ENCODE measurements at regions of chr4 and their contacts with region 1.

Region 1: DNA sequence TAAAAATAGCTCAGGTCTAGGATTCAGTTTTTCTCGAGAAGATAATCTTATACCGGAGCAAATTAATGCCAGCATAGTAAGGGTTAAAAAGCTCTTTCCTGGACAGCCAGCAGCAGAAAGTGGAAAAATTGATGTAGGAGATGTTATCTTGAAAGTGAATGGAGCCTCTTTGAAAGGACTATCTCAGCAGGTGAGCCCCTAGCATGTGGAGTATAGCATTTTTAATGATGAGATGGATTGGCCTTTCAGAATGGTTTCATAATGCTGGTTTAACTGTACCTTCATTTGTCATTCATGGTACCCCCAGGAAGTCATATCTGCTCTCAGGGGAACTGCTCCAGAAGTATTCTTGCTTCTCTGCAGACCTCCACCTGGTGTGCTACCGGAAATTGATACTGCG is 79.4 kb downstream of the SLC10A6 start:
- DNase-seq: no peak
- ATAC-seq: no peak
- H3K4me3 Mint-ChIP-seq: no peak overlapping the region
- H3K27ac Mint-ChIP-seq: no peak overlapping the region
- H3K4me1 Mint-ChIP-seq: no peaks in the 10 kb centered on the region
- H3K27me3 Mint-ChIP-seq: no peaks in the 10 kb centered on the region

Region 2: DNA sequence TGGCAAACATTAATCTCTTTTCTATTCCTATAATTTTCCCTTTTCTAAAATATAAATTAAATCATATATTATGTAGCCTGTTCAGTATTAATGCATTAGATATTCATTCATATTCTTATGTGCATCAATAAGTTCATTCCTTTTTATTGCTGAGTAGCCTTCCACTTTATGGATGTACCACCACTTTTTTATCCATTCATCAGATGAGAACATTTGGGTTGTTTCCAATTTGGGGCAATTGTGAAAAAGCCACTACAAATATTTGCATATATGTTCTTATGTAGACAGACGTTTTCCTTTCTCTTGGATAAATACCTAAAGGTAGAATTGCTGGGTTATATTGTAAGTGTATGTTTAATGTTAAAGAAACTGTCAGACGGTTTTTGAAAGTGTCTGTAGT is 330.5 kb before region 1 on chr4:
- CTCF ChIA-PET with region 1: no interaction called
- POLR2A ChIA-PET with region 1: no interaction called
- intact Hi-C with region 1: loop called in 1 of 2 experiments (anchors 5 kb)
- DNase-seq: no peak
- ATAC-seq: no peak
- H3K4me3 Mint-ChIP-seq: no peak overlapping the region
- H3K27ac Mint-ChIP-seq: no peak overlapping the region
- H3K4me1 Mint-ChIP-seq: no peaks in the 10 kb centered on the region
- H3K27me3 Mint-ChIP-seq: peaks cover 6% of the 10 kb centered on the region

Measured in activated CD4-positive, alpha-beta T cell treated with anti-CD3 and anti-CD28 coated beads for 36 hours (primary cell).